Activated CD4-positive, alpha-beta memory T cell treated with anti-CD3 and anti-CD28 coated beads for 36 hours (primary cell): ENCODE measurements at regions of chr2 and their contacts with region 1.

Region 1: DNA sequence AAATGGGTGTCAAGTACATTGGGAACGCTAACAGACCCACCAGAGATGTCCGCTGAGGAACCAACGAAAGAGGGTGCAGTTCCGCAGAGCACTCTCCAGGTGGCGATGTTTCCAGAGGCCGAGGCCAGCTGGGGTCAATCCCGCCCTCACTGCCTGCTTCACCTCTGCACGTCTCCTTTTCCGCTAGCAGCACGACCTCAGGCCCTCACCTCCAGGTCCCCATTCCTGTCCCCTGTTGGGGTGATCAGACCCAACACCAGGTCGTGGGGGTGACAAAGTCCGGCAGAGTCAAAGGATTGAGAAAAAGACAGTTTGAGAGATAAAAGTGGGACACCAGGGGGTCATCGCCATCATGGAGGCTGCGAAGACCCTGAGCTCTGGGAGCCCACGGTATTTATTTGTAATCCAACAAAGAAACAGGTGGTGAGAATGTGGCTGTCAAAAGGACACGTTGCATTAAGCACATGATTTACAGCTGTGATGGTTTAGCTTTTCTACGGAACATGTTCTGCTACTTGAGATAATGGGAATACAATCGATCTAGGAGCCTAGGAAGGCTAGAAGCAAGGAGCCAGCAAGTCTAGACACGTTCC is 27.3 kb downstream of the ZAP70 start:
- DNase-seq: peak; percentile 58
- H3K4me3 Mint-ChIP-seq: no peak overlapping the region
- H3K27ac Mint-ChIP-seq: no peak overlapping the region
- H3K4me1 Mint-ChIP-seq: peaks cover 46% of the 10 kb centered on the region
- H3K27me3 Mint-ChIP-seq: no peaks in the 10 kb centered on the region

Region 2: DNA sequence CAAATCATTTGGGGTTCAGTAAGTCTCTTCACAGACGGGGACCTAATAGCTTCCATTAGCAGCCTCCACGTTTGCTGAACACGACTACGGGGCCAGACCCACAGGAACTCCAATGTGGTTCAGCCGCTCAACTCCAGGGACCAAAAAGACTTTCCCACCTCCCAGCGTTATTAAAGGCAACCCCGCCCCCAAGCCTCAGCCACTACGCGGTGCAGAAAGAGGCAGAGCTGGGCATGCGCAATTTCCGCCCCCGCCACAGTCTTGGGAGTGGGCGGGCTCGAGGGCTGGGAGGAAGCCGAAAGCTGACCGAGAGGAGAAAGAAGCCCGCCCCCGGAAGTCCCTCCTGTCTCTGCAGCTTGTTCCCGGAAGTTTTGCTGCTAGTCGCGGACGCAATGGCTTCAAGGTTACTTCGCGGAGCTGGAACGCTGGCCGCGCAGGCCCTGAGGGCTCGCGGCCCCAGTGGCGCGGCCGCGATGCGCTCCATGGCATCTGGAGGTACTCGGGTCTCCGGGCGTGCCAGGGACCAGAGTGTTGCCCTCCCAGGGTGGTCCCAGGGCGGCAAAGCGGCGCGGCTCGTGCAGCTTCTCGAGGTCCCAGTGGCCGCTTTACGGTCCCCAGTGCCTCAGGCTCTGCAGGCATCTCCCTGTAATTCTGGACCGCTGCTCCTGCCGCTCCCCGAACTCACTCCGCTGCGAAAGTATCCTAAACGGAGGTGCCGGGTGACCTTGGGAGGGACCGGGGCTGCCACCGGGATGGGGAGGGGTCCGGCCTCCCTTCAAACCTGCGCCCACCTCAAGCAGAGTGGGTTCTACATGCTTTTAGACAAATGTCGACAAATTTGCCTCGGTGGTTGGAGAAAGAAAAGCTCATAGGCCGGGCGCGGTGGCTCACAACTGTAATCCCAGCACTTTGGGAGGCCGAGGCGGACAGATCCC is 94.7 kb before region 1 on chr2 and contains the start of gene COX5B:
- CTCF ChIA-PET with region 1: interaction called, 4 read pairs
- POLR2A ChIA-PET with region 1: no interaction called
- intact Hi-C with region 1: loop called (anchors 5 kb)
- DNase-seq: peak; percentile 100
- H3K4me3 Mint-ChIP-seq: peak within 1 kb of the TSS; percentile 81
- H3K27ac Mint-ChIP-seq: peak within 1 kb of the TSS; percentile 88
- H3K4me1 Mint-ChIP-seq: peaks cover 21% of the 10 kb centered on the region
- H3K27me3 Mint-ChIP-seq: no peaks in the 10 kb centered on the region
- total RNA-seq, gene COX5B: 215 to 217 TPM

Region 3: DNA sequence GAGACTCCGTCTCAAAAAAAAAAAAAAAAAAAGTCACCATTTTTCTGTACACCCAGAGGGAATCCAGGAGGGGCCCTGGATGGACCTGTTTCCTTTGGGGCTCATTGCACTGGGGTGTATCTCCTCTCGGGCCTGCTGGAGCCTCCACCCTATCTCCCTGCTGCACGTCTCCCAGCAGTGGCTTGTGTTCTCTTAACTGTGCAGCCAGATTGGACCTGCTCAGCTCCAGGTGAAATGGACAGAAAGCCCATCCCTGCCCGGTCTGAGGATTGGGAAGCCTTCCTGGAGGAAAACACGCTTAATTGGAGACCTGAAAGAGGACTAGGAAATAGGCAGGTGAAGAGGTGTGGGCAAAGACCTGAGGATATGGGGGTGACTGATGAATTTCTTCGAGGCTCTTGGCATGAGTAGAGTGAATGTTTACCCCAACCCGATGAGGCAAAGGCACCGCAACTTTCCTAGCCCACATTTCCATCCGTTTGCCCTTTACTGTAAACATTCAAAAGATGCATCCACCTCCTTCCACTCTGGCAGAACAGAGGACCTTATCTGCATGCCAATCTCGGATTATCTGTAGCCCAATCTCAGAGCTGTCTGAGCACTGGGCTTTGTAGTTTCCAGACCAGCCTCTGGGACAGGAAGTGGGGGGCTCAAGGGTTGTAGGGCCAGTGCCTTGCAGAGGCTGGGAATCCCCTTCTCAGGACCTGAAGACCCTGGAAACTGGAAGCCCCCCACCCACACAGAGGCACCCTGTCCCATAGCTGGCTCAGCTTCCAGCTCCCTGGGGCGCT is 29.9 kb before region 1 on chr2:
- CTCF ChIA-PET with region 1: interaction called, 33 read pairs
- POLR2A ChIA-PET with region 1: interaction called, 26 read pairs
- intact Hi-C with region 1: loop called (anchors 1 kb)
- DNase-seq: peak; percentile 43
- H3K4me3 Mint-ChIP-seq: no peak overlapping the region
- H3K27ac Mint-ChIP-seq: peak overlapping the region; percentile 58
- H3K4me1 Mint-ChIP-seq: peaks cover 42% of the 10 kb centered on the region
- H3K27me3 Mint-ChIP-seq: no peaks in the 10 kb centered on the region

Region 4: GRCh38 chr2:97718051-97718882 is 22.4 kb before region 1 on chr2:
- CTCF ChIA-PET with region 1: interaction called, 26 read pairs
- POLR2A ChIA-PET with region 1: interaction called, 26 read pairs
- intact Hi-C with region 1: loop called (anchors 1 kb)
- DNase-seq: peak; percentile 87
- H3K4me3 Mint-ChIP-seq: peak overlapping the region; percentile 76
- H3K27ac Mint-ChIP-seq: peak overlapping the region; percentile 95
- H3K4me1 Mint-ChIP-seq: peaks cover 71% of the 10 kb centered on the region
- H3K27me3 Mint-ChIP-seq: no peaks in the 10 kb centered on the region

Region 5: DNA sequence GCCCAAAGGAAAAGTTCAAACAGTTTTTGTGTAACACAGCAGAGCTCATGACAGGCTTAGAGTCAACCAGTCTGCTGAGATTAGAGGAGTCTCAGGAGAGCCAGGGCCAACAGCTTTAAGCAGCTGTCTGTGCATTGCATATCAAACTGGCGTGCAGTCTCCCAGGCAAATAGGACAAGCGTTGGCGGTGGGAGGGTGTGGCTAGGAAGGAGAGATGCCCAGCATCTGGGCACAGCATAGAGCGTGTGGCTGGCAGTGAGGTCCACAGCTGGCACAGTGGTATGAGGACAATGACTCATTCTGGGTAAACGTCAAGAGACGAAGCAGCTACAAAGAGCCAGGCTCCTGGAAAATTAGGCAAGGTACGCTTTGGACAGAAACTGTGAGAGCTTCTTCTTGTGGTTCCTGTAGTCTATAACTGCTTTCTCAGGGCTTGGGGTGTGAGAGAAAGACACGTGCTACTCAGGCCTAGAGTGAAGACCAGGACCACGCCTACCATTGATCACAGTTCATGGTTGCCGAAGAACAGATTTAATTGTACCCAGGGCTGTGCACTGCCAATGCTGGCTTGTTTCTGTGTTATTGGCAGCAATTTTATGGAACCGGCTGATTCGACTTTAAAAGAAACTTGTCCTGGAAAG is 12.5 kb before region 1 on chr2:
- CTCF ChIA-PET with region 1: interaction called, 37 read pairs
- POLR2A ChIA-PET with region 1: interaction called, 5 read pairs
- intact Hi-C with region 1: no loop called
- DNase-seq: peak; percentile 47
- H3K4me3 Mint-ChIP-seq: no peak overlapping the region
- H3K27ac Mint-ChIP-seq: peak overlapping the region; percentile 40
- H3K4me1 Mint-ChIP-seq: peaks cover 51% of the 10 kb centered on the region
- H3K27me3 Mint-ChIP-seq: no peaks in the 10 kb centered on the region

Region 6: GRCh38 chr2:97754690-97755346 is 14.1 kb after region 1 on chr2:
- CTCF ChIA-PET with region 1: interaction called, 11 read pairs
- POLR2A ChIA-PET with region 1: interaction called, 3 read pairs
- intact Hi-C with region 1: no loop called
- DNase-seq: no peak
- H3K4me3 Mint-ChIP-seq: no peak overlapping the region
- H3K27ac Mint-ChIP-seq: no peak overlapping the region
- H3K4me1 Mint-ChIP-seq: peaks cover 5% of the 10 kb centered on the region
- H3K27me3 Mint-ChIP-seq: no peaks in the 10 kb centered on the region